Caco-2 (cell line): ENCODE measurements at regions of chr17 and their contacts with region 1.

Region 1: DNA sequence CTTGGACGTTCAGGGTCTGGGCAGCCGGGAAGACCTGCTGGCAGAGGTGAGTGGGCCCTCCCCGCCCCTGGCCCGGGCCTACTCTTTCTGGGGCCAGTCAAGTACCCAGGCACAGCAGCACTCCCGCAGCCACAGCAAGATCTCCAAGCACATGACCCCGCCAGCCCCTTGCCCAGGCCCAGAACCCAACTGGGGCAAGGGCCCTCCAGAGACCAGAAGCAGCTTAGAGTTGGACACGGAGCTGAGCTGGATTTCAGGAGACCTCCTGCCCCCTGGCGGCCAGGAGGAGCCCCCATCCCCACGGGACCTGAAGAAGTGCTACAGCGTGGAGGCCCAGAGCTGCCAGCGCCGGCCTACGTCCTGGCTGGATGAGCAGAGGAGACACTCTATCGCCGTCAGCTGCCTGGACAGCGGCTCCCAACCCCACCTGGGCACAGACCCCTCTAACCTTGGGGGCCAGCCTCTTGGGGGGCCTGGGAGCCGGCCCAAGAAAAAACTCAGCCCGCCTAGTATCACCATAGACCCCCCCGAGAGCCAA is 8.6 kb upstream of the ABCC3 start:
- DNase-seq: peak; percentile 92 to 94
- H3K4me3 ChIP-seq: no peak overlapping the region
- H3K4me3 Mint-ChIP-seq: no peak overlapping the region
- H3K27ac Mint-ChIP-seq: peak overlapping the region; percentile 0
- H3K4me1 ChIP-seq: peaks cover 37% of the 10 kb centered on the region
- H3K4me1 Mint-ChIP-seq: peaks cover 29% of the 10 kb centered on the region
- H3K27me3 ChIP-seq: no peaks in the 10 kb centered on the region
- H3K27me3 Mint-ChIP-seq: no peaks in the 10 kb centered on the region
- CTCF ChIP-seq: peak; percentile 99

Region 2: GRCh38 chr17:50507871-50508572 is 118.1 kb before region 1 on chr17 and contains the start of gene MYCBPAP:
- CTCF ChIA-PET with region 1: interaction called, 6 read pairs
- POLR2A ChIA-PET with region 1: interaction called, 10 read pairs
- intact Hi-C with region 1: no loop called
- DNase-seq: peak; percentile 90 to 92
- H3K4me3 ChIP-seq: peak within 1 kb of the TSS; percentile 36
- H3K4me3 Mint-ChIP-seq: peak within 1 kb of the TSS; percentile 67
- H3K27ac Mint-ChIP-seq: peak within 1 kb of the TSS; percentile 58
- H3K4me1 ChIP-seq: peaks cover 16% of the 10 kb centered on the region
- H3K4me1 Mint-ChIP-seq: peaks cover 15% of the 10 kb centered on the region
- H3K27me3 ChIP-seq: no peaks in the 10 kb centered on the region
- H3K27me3 Mint-ChIP-seq: no peaks in the 10 kb centered on the region
- CTCF ChIP-seq: peak; percentile 35 to 53
- total RNA-seq, gene MYCBPAP: 1.3 and 2.7 TPM in 2 replicates

Region 3: DNA sequence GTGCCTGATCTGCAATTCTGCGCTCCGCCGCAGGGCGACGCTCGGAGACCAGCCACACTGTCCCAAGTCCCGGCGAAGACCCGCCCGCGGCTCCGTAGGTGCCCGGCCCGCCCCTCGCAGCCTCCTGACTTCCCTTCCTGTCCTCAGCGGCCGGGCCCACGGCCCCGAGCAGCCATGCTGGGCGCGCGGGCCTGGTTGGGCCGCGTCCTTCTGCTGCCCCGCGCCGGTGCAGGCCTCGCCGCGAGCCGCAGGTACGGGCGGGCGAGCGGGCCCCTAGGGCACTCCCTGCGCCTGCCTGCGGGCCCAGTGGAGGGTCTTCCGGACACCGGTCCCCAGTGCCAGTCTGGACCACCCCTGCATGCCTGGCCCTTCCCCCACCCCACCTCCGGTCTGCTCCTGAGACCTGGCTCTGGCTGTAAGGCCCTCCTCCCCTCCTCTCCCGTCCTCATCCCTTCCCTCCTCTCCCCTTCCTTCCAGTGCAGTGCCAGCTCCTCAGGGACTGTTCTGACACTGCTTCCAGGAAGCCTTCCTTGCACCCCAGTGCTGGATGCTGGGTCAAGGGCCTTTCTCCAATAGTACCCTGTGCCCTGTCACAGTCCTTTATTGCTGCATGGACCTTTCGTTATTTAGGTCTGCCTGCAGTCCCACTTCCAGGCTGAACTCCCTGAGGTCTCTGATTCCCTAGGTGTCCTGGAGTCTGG is 78.9 kb before region 1 on chr17 and contains the start of gene SPATA20:
- CTCF ChIA-PET with region 1: interaction called, 272 read pairs
- POLR2A ChIA-PET with region 1: interaction called, 9 read pairs
- intact Hi-C with region 1: loop called (anchors 1 kb)
- DNase-seq: peak; percentile 99
- H3K4me3 ChIP-seq: peak within 1 kb of the TSS; percentile 57
- H3K4me3 Mint-ChIP-seq: peak within 1 kb of the TSS; percentile 80
- H3K27ac Mint-ChIP-seq: peak within 1 kb of the TSS; percentile 72
- H3K4me1 ChIP-seq: peaks cover 38% of the 10 kb centered on the region
- H3K4me1 Mint-ChIP-seq: peaks cover 43% of the 10 kb centered on the region
- H3K27me3 ChIP-seq: no peaks in the 10 kb centered on the region
- H3K27me3 Mint-ChIP-seq: no peaks in the 10 kb centered on the region
- CTCF ChIP-seq: peak; percentile 100
- total RNA-seq, gene SPATA20: 149 and 176 TPM in 2 replicates

Region 4: DNA sequence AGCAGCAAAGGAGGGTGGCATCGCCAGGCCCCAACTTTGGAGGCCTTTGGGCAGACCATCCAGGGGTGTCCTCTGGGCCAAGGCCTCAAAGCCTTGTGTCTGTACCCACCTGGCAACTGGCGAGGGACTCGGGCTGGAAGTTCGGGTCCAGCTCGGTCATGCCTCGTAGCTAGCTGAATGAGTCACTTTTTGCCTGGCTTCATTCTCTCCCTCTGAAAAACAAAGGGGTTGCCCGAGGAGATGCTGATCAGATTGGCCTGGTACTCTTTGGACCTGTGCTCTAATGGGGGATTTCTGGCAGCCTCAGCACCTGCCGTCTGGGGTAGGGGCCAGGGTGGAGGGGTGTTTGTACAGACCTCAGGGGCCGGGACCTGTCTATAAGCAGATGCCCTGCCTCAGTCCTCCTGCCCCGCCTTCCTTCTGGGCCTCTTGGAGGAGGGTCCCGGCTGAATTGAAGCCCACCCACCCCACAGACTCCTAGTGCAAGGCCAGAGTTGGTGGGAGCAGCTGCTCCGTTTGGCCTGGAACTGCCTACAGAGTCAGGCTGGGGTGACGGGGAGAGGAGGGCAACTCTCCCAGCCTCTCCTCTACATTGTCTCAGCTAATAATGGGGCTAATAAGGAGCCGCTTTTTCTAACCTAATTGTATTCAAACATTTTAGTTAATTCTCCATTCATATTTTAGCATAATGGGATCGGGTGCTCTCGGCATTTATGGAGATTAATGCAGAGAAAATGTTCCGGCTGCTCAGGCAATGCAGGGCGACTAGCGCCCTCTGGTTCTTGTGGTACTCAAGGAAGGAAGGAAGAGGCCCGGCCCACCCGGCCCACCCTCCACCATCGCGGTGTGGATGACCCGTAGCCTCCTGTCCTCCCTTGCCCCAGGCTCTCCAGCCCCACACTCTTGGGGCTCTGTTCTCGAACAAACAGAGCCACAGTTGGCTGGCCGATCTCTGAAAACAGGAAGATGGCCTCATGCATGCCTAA is 12.8 kb before region 1 on chr17:
- CTCF ChIA-PET with region 1: interaction called, 10 read pairs
- POLR2A ChIA-PET with region 1: interaction called, 3 read pairs
- intact Hi-C with region 1: no loop called
- DNase-seq: no peak
- H3K4me3 ChIP-seq: no peak overlapping the region
- H3K4me3 Mint-ChIP-seq: no peak overlapping the region
- H3K27ac Mint-ChIP-seq: no peak overlapping the region
- H3K4me1 ChIP-seq: no peaks in the 10 kb centered on the region
- H3K4me1 Mint-ChIP-seq: no peaks in the 10 kb centered on the region
- H3K27me3 ChIP-seq: no peaks in the 10 kb centered on the region
- H3K27me3 Mint-ChIP-seq: no peaks in the 10 kb centered on the region
- CTCF ChIP-seq: peak; percentile 22 to 23

Region 5: DNA sequence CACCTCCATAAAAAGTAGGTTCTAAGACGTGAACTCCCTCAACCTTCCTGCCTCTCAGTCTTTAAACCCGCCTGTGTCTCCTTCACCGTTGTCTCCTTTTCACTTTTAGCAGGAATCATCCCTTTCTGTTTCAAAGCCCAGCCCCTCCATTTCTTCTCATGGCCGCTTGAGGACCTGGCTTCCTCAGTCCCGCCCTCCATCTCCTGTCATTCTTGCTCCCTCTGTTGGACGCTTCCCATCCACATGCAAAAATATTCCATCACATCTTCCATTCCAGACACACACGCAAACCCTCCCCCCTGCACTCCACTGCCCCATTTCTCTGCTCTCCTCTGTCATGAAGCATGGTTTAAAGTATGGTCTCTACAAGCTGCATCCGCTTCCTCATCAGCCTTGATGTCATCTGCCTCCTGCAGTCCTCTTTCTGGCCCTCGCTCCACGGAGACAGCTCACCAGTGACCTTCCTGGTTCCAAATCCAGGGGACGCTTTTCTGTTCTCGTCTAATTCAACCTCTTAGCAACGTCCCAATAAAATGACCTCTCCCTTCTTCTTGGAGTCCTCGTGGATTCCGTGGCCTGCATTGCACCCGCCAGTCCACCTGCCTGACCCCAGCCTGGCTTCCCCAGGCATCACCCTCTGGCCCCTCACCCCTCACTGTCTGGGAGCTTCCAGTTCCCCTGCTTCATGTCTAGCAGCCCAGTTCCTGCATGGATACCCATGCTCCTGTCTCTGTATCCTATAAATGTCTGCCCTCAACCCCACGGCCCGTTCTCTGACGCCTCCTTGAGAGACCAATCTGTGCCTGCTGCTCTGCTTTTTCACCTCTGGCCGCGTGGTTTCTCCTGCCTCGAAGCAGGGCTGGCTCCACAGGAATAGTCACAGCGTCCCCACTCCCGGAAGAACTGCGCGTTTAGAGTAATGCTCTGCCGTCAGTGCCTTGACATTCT is 55.4 kb after region 1 on chr17:
- CTCF ChIA-PET with region 1: interaction called, 22 read pairs
- POLR2A ChIA-PET with region 1: interaction called, 7 read pairs
- intact Hi-C with region 1: loop called (anchors 1 kb)
- DNase-seq: peak; percentile 88 to 89
- H3K4me3 ChIP-seq: no peak overlapping the region
- H3K4me3 Mint-ChIP-seq: peak overlapping the region; percentile 14
- H3K27ac Mint-ChIP-seq: peak overlapping the region; percentile 66
- H3K4me1 ChIP-seq: peaks cover 73% of the 10 kb centered on the region
- H3K4me1 Mint-ChIP-seq: peaks cover 58% of the 10 kb centered on the region
- H3K27me3 ChIP-seq: no peaks in the 10 kb centered on the region
- H3K27me3 Mint-ChIP-seq: no peaks in the 10 kb centered on the region
- CTCF ChIP-seq: peak; percentile 94

Region 6: GRCh38 chr17:50707289-50708049 is 81.4 kb after region 1 on chr17 and contains the start of gene ANKRD40:
- CTCF ChIA-PET with region 1: interaction called, 22 read pairs
- POLR2A ChIA-PET with region 1: interaction called, 10 read pairs
- intact Hi-C with region 1: no loop called
- DNase-seq: peak; percentile 95 to 99
- H3K4me3 ChIP-seq: peak within 1 kb of the TSS; percentile 68
- H3K4me3 Mint-ChIP-seq: peak within 1 kb of the TSS; percentile 97
- H3K27ac Mint-ChIP-seq: peak within 1 kb of the TSS; percentile 79
- H3K4me1 ChIP-seq: peaks cover 15% of the 10 kb centered on the region
- H3K4me1 Mint-ChIP-seq: peaks cover 31% of the 10 kb centered on the region
- H3K27me3 ChIP-seq: no peaks in the 10 kb centered on the region
- H3K27me3 Mint-ChIP-seq: no peaks in the 10 kb centered on the region
- CTCF ChIP-seq: no peak
- total RNA-seq, gene ANKRD40: 113 and 114 TPM in 2 replicates